ENCODE measurements at regions of chr7 and their contacts with region 1.

Region 1: GRCh38 chr7:25093268-25093826 is 31.7 kb downstream of the CYCS start:
- DNase-seq: peak; percentile 84
- H3K4me3 ChIP-seq: no peak overlapping the region
- H3K27ac ChIP-seq: no peak overlapping the region
- H3K4me1 ChIP-seq: peaks cover 12% of the 10 kb centered on the region
- H3K27me3 ChIP-seq: no peaks in the 10 kb centered on the region
- CTCF ChIP-seq: peak; percentile 82

Region 2: DNA sequence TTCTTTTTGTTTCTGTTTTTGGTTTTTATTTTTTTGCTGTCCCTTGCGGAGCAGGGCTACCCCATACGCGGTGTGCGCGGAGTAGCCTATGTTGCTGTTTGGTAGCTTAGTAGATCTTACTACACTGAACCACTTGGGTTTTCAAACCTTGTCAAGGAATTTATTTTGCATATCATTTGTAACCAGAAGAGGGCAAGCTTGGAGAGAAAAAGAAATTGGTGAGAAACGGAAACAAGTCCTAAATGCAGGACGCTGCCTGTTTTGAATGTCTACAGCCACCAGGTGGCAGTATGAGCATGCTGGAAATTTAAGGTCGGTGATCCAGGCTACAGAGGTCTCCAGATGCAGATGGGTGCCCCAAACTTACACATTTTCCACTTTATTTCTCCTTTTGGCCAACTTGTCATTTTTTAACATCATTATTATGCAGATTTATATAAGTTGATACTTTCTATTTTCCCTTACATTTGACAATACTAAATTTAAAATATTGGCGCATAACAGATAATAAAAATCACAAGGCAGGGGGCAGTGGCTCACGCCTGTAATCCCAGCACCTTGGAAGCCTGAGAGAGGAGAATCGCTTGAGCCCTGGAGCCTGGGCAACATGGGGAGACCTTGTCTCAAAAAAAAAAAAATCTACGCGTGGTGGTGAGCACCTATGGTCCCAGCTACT is 1546.3 kb before region 1 on chr7:
- CTCF ChIA-PET with region 1: no interaction called
- POLR2A ChIA-PET with region 1: no interaction called
- intact Hi-C with region 1: loop called (anchors 10 kb)
- DNase-seq: peak; percentile 94
- H3K4me3 ChIP-seq: no peak overlapping the region
- H3K27ac ChIP-seq: no peak overlapping the region
- H3K4me1 ChIP-seq: no peaks in the 10 kb centered on the region
- H3K27me3 ChIP-seq: no peaks in the 10 kb centered on the region
- CTCF ChIP-seq: peak; percentile 97

Region 3: DNA sequence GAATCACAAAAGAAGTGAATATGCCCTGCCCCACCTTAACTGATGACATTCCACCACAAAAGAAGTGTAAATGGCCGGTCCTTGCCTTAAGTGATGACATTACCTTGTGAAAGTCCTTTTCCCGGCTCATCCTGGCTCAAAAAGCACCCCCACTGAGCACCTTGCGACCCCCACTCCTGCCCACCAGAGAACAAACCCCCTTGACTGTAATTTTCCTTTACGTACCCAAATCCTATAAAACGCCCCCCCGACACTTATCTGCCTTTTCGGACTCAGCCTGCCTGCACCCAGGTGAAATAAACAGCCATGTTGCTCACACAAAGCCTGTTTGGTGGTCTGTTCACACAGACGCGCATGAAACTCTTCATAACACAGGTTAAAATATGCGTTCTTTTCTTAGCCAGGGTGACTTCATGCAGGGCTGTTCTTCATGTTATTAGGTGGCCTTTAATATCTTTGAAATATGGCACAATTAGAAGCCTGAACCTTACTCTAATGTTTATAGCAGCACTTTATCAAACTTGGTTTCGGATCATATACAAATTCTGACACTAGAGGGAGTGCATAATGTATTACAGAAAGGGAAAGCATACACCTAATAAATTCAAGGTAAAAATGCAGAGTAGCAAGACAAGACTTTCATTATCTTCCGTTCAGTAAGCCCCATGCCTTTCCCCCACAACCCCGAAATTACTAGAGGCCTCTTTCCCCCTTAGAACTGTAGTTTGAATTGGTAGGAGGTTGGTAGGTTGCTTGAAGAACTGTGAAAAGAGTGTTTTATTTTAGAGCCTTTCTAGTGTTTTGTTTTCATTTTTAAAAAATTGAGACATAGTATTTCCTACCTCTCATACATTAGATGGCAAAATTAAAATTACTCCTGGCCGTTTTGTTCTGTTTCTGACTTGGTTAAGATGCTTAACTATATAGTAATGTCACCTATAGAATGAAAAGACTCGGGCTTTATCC is 691.4 kb before region 1 on chr7:
- CTCF ChIA-PET with region 1: interaction called, 3 read pairs
- POLR2A ChIA-PET with region 1: no interaction called
- intact Hi-C with region 1: loop called (anchors 10 kb)
- DNase-seq: peak; percentile 41
- H3K4me3 ChIP-seq: peak overlapping the region; percentile 21
- H3K27ac ChIP-seq: no peak overlapping the region
- H3K4me1 ChIP-seq: peaks cover 39% of the 10 kb centered on the region
- H3K27me3 ChIP-seq: no peaks in the 10 kb centered on the region
- CTCF ChIP-seq: peak; percentile 65

Region 4: DNA sequence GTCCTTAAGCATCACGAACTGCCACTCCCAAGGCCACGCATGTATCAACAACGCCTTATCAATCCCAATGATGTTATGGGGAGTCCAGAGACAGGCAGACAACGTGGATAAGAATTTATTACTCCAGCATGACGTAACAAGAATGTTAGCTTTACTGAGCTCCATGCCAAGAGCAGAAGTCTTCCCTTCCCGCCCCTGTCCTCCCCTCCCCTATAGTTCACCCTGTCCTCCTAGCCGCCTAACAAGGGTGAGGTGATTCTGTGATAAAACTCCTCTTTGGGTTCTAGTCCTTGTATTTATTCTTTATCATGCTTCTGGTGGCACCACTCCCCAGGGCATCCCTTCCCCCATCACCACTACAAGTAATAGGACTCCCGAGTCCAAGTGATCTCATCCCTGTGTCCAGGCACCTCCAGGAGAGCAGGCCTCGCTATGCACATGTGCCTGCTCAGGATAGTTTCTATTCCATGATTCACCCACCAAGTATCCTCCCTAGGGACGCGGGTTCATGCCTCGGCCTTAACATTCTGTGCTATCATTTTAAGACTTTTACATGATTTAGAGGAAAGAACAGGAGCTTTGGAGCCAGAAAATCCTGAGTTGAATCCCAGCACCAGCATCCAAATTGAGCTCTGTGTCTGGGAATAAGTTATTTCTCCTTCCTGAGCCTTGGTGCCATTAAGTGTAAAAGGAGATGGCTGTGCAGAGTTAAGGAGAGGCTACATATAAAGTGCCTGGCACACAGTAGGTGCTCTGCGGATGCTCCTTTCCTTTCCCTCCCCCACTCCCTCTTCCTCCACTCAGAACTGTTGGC is 351.4 kb before region 1 on chr7:
- CTCF ChIA-PET with region 1: no interaction called
- POLR2A ChIA-PET with region 1: no interaction called
- intact Hi-C with region 1: loop called (anchors 10 kb)
- DNase-seq: no peak
- H3K4me3 ChIP-seq: no peak overlapping the region
- H3K27ac ChIP-seq: no peak overlapping the region
- H3K4me1 ChIP-seq: no peaks in the 10 kb centered on the region
- H3K27me3 ChIP-seq: no peaks in the 10 kb centered on the region
- CTCF ChIP-seq: no peak

Region 5: GRCh38 chr7:24819916-24820689 is 273.2 kb before region 1 on chr7:
- CTCF ChIA-PET with region 1: interaction called, 13 read pairs
- POLR2A ChIA-PET with region 1: no interaction called
- intact Hi-C with region 1: no loop called
- DNase-seq: peak; percentile 87
- H3K4me3 ChIP-seq: no peak overlapping the region
- H3K27ac ChIP-seq: no peak overlapping the region
- H3K4me1 ChIP-seq: peaks cover 27% of the 10 kb centered on the region
- H3K27me3 ChIP-seq: no peaks in the 10 kb centered on the region
- CTCF ChIP-seq: peak; percentile 92

Region 6: DNA sequence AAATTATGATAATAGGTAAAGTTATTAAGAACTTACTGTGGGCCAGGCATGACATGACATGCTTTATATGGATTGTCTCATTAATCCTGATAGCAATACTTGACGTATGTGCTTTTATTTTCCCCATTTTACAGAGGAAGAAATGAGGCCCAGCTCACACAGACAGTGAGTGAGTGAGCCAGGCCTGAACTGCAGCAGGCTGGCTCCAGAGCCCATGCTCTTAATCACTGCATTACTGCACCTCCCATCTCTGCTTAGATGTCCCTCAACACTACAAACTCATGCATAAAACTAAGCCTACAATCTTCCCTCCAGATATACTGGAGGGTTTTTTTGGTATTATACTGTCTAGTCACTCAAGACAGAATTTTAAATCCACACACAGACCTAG is 44.9 kb before region 1 on chr7:
- CTCF ChIA-PET with region 1: no interaction called
- POLR2A ChIA-PET with region 1: no interaction called
- intact Hi-C with region 1: no loop called
- DNase-seq: no peak
- H3K4me3 ChIP-seq: no peak overlapping the region
- H3K27ac ChIP-seq: no peak overlapping the region
- H3K4me1 ChIP-seq: no peaks in the 10 kb centered on the region
- H3K27me3 ChIP-seq: no peaks in the 10 kb centered on the region
- CTCF ChIP-seq: no peak